ENCODE measurements at regions of chr20 and their contacts with region 1.

Region 1: DNA sequence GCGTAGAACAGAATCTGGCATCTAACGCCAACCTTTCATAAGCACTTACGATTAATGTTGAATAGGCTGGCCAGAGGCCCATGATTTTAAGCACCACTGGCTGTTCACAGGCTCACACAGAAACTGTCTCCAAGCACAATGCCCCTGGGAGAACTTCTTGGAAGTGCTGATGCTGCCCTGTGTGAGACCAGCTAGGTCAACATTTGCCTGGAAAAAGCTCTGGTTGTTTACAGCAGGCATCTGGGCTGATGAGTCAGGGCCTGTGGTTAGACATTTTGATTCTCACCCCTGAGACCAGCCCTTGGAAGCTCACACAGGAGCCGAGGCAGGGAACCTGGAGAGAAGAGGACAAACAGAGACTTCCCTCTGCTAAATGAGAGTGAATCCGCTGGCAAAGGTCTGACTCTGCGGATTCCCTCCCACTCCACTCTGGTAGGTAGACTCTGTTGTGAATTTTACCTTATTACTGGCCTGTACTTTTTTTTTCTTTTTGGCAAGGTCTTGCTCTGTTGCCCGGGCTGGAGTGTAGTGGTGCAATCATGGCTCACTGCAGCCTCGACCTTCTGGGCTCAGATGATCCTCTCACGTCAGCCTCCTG is 6.8 kb upstream of the SULF2 start:
- DNase-seq: peak; percentile 97
- H3K4me3 ChIP-seq: no peak overlapping the region
- H3K27ac ChIP-seq: peak overlapping the region; percentile 83
- H3K4me1 ChIP-seq: peaks cover 58% of the 10 kb centered on the region
- H3K27me3 ChIP-seq: no peaks in the 10 kb centered on the region
- CTCF ChIP-seq: no peak

Region 2: GRCh38 chr20:47847868-47848531 is 55.9 kb after region 1 on chr20:
- CTCF ChIA-PET with region 1: no interaction called
- dilution Hi-C with region 1: no loop called
- in situ Hi-C with region 1: no loop called
- intact Hi-C with region 1: loop called (anchors 2 kb)
- DNase-seq: no peak
- H3K4me3 ChIP-seq: no peak overlapping the region
- H3K27ac ChIP-seq: no peak overlapping the region
- H3K4me1 ChIP-seq: peaks cover 37% of the 10 kb centered on the region
- H3K27me3 ChIP-seq: no peaks in the 10 kb centered on the region
- CTCF ChIP-seq: no peak

Region 3: GRCh38 chr20:48012197-48013085 is 220.3 kb after region 1 on chr20:
- CTCF ChIA-PET with region 1: no interaction called
- dilution Hi-C with region 1: no loop called
- in situ Hi-C with region 1: loop called in 1 of 2 experiments (anchors 10 kb)
- intact Hi-C with region 1: loop called (anchors 5 kb)
- DNase-seq: peak; percentile 89
- H3K4me3 ChIP-seq: no peak overlapping the region
- H3K27ac ChIP-seq: no peak overlapping the region
- H3K4me1 ChIP-seq: no peaks in the 10 kb centered on the region
- H3K27me3 ChIP-seq: no peaks in the 10 kb centered on the region
- CTCF ChIP-seq: peak; percentile 26 to 68